PC-3 (cell line): ENCODE measurements at regions of chr3 and their contacts with region 1.

Region 1: DNA sequence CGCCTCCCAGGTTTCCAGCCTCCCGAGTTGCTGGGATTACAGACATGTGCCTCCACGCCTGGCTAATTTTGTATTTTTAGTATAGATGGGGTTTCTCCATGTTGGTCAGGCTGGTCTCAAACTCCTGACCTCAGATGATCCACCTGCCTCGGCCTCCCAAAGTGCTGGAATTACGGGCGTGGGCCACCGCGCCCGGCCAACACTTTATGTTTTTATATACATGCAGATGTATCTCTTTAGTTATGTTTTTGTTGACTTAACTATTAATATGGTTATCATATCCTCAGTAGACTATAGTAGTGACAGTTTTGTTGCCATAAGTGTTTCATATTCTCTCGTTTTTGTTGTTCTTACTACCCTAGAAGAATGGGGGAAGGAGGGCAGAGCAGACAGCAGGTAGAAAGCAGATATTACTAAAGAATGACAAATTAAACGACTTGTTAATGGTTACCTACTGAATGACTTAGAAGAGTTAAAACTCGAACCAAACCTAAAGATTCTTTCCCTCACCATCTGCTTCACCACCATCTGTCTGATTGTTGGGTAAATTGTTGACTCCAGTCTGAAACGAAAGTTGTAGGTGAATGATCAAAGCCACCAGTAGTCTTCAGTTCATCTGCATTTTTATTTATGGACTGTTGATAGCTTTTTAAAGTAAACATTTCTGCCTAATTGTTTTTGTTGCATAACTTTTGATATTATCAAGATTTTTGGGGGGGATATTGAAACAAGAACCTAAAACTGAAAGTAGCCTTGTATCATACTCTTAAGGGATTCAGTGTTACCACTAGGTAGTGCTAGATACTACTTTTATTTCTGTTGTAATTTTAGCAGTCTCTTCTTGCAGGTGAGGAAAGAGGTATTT is 89.3 kb downstream of the RASA2 start:
- DNase-seq: peak; percentile 24
- ATAC-seq: peak; percentile 48
- H3K4me3 ChIP-seq: no peak overlapping the region
- H3K27ac ChIP-seq: no peak overlapping the region
- H3K4me1 ChIP-seq: no peaks in the 10 kb centered on the region
- H3K27me3 ChIP-seq: no peaks in the 10 kb centered on the region
- CTCF ChIP-seq: peak; percentile 62

Region 2: GRCh38 chr3:141370065-141370533 is 206.0 kb before region 1 on chr3:
- CTCF ChIA-PET with region 1: no interaction called
- POLR2A ChIA-PET with region 1: no interaction called
- intact Hi-C with region 1: no loop called
- DNase-seq: peak; percentile 76
- ATAC-seq: peak; percentile 30
- H3K4me3 ChIP-seq: peak overlapping the region; percentile 56; the same call in 1 of the 2 replicates
- H3K27ac ChIP-seq: peak overlapping the region; percentile 100
- H3K4me1 ChIP-seq: peaks cover 48% of the 10 kb centered on the region
- H3K27me3 ChIP-seq: no peaks in the 10 kb centered on the region
- CTCF ChIP-seq: peak; percentile 34; the same call in 1 of the 2 replicates

Region 3: DNA sequence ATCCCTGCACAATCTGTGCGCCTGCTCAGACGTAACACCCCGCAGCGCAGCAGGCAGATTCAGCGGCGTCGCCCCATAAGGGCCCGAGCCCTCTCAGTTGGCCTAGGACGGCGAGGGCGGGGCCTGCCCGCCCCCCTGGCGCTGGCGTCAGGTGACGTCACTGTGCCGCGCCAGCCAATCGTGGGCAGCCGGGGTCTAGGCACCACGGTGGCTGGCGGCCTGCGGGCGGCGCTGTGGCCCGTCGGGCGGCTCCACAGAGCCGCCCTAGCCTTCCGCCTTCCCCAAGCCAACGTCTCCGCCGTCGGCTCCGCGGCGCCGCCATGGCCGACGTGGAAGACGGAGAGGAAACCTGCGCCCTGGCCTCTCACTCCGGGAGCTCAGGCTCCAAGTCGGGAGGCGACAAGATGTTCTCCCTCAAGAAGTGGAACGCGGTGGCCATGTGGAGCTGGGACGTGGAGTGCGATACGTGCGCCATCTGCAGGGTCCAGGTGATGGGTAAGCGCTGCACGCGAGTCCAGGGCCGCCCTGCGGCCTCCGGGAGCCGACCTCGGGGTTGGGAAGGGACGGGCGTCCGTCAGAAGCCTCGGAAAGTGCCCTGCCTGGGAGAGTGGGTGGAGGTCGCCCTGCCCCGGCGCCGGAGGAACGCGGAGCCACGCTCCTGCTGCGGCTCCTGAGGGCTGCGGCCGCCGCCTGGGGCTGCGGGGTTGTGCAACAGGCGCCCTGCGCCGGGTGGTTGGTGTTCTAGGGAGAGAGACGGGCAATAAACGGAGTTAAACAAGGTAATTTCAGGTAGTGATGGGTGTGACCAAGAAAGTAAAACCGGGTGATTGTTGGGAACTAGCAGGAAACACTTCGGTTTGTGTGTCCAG is 162.1 kb after region 1 on chr3 and contains the start of gene RNF7:
- CTCF ChIA-PET with region 1: no interaction called
- POLR2A ChIA-PET with region 1: no interaction called
- intact Hi-C with region 1: loop called (anchors 1 kb)
- DNase-seq: peak; percentile 95
- ATAC-seq: peak; percentile 95
- H3K4me3 ChIP-seq: peak within 1 kb of the TSS; percentile 95
- H3K27ac ChIP-seq: peak within 1 kb of the TSS; percentile 74
- H3K4me1 ChIP-seq: peaks cover 19% of the 10 kb centered on the region
- H3K27me3 ChIP-seq: no peaks in the 10 kb centered on the region
- CTCF ChIP-seq: peak; percentile 71
- total RNA-seq, gene RNF7: 42.3 and 42.9 TPM in 2 replicates

Region 4: DNA sequence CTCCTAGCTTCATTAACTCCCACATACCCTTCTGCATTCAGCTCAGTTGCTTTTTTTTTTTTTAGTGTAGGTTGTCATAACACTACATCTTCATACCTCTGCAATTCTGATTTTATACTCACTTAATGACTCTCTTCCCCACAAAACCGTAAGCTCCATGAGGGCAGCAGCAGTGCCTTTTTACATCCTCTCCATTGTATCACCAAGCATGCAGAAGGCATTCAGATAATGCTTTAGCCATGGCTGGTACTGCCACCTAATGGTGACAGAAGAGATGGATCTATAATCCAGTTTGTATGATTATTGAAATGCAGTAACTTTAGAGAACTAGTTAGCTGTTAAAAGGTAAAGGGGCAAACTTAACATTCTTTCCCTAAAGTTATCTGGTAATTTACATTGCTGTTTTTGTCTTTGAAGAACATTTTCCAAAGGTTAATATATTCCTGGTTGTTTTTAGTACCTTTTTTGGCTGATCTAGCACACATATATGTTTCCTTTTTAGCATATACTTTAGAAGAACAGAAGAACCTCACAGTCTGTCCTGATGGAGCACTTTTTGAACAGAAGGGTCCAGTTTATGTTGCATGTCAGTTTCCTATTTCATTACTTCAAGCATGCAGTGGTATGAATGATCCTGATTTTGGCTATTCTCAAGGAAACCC is 337.2 kb after region 1 on chr3:
- CTCF ChIA-PET with region 1: interaction called, 3 read pairs
- POLR2A ChIA-PET with region 1: no interaction called
- intact Hi-C with region 1: loop called (anchors 5 kb)
- DNase-seq: peak; percentile 71
- ATAC-seq: peak; percentile 70
- H3K4me3 ChIP-seq: no peak overlapping the region
- H3K27ac ChIP-seq: no peak overlapping the region
- H3K4me1 ChIP-seq: no peaks in the 10 kb centered on the region
- H3K27me3 ChIP-seq: no peaks in the 10 kb centered on the region
- CTCF ChIP-seq: peak; percentile 75